ENCODE measurements at regions of chr13 and their contacts with region 1.

Region 1: DNA sequence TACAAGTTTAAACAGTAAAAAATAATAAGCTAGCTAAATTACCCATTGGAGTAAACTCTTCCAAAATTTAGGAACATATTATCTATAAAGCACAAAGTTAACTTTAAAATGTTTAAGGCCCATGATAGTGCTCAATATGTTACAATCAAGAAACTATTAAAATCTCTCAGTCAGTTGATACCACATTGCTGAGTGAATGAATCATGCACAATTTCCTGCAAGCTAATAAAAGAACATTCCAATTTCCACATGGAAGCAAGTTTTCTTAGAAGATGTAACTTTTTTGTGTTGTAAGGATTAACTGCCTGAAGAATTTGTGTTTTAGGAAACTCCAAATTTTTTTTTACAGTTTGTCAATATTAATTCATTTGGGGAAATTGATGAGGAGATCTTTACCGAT is 666.6 kb downstream of the SLITRK1 start:
- DNase-seq: peak; percentile 81
- ATAC-seq: peak; percentile 42
- H3K4me3 ChIP-seq: no peak overlapping the region
- H3K27ac ChIP-seq: peak overlapping the region; percentile 67; the same call in 1 of the 2 replicates
- H3K4me1 ChIP-seq: peaks cover 12% of the 10 kb centered on the region; the same call in 1 of the 2 replicates
- H3K27me3 ChIP-seq: no peaks in the 10 kb centered on the region
- CTCF ChIP-seq: no peak
- POLR2A ChIP-seq: no peak
- RAD21 ChIP-seq: no peak

Region 2: GRCh38 chr13:82647540-82647939 is 568.1 kb before region 1 on chr13:
- CTCF ChIA-PET with region 1: no interaction called
- POLR2A ChIA-PET with region 1: no interaction called
- dilution Hi-C with region 1: no loop called
- in situ Hi-C with region 1: no loop called
- intact Hi-C with region 1: loop called (anchors 5 kb)
- DNase-seq: no peak
- ATAC-seq: no peak
- H3K4me3 ChIP-seq: no peak overlapping the region
- H3K27ac ChIP-seq: no peak overlapping the region
- H3K4me1 ChIP-seq: no peaks in the 10 kb centered on the region
- H3K27me3 ChIP-seq: no peaks in the 10 kb centered on the region
- CTCF ChIP-seq: no peak
- POLR2A ChIP-seq: no peak
- RAD21 ChIP-seq: no peak

Region 3: DNA sequence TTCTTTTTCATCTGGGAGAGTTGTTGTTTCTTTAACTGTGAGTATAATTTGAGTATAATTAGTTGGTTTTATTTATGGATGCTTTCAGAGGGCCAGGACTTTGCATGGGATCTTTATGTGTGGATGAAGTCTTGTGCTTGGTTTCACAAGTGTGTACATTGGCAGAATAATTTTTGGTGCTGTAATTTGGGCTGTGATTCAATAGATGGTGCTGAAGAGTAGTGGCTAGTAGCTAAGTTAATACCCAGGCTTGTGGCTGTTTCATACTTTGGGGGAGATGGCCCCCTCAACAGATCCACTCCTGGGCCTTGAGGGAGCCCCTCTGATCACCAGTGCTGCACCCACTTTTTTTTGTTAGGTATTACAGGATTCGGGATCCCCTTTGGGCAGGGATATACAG is 475.7 kb before region 1 on chr13:
- CTCF ChIA-PET with region 1: no interaction called
- POLR2A ChIA-PET with region 1: no interaction called
- dilution Hi-C with region 1: no loop called
- in situ Hi-C with region 1: no loop called
- intact Hi-C with region 1: loop called (anchors 10 kb)
- DNase-seq: peak; percentile 12
- ATAC-seq: peak; percentile 49; the same call in 1 of the 2 replicates
- H3K4me3 ChIP-seq: no peak overlapping the region
- H3K27ac ChIP-seq: no peak overlapping the region
- H3K4me1 ChIP-seq: no peaks in the 10 kb centered on the region
- H3K27me3 ChIP-seq: no peaks in the 10 kb centered on the region
- CTCF ChIP-seq: peak; percentile 43
- POLR2A ChIP-seq: no peak
- RAD21 ChIP-seq: peak; percentile 38; the same call in 1 of the 2 replicates

Region 4: GRCh38 chr13:82867284-82867683 is 348.3 kb before region 1 on chr13:
- CTCF ChIA-PET with region 1: no interaction called
- POLR2A ChIA-PET with region 1: interaction called, 10 read pairs
- dilution Hi-C with region 1: no loop called
- in situ Hi-C with region 1: no loop called
- intact Hi-C with region 1: no loop called
- DNase-seq: no peak
- ATAC-seq: no peak
- H3K4me3 ChIP-seq: no peak overlapping the region
- H3K27ac ChIP-seq: no peak overlapping the region
- H3K4me1 ChIP-seq: no peaks in the 10 kb centered on the region
- H3K27me3 ChIP-seq: no peaks in the 10 kb centered on the region
- CTCF ChIP-seq: no peak
- POLR2A ChIP-seq: no peak
- RAD21 ChIP-seq: no peak

Region 5: DNA sequence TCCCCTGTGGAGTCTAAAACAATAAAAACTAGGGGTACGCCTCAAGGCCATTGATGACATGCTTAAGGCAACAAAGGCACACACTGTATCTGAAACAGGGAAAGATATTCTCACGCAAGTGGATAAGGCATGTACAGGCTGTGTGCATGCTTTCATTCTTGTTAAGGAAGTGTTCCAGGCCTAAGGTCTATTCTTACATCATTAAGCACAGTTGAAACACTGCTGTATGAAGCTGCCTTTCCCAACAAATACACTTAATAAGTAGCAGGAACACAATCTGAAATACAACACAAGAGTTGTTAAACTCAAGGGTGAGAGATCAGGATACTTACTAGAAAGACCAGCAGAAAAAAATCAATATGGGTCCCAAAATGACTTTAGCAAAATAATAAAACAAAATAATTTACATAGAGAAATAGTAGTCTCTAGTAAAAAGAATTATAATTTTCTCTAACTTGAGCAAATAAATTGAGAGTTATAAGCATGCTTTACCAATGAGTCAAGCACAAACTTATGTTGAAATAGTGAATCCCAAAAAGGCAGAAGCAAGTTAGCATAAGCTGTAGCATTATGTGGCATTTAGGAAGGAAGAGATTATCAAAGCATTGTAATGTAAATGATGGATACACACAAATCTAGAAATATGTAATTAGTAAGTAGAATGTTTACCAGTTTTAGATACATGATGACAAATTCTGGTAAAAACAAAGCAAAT is 130.3 kb before region 1 on chr13:
- CTCF ChIA-PET with region 1: no interaction called
- POLR2A ChIA-PET with region 1: no interaction called
- dilution Hi-C with region 1: no loop called
- in situ Hi-C with region 1: no loop called
- intact Hi-C with region 1: loop called (anchors 5 kb)
- DNase-seq: peak; percentile 69
- ATAC-seq: peak; percentile 77
- H3K4me3 ChIP-seq: no peak overlapping the region
- H3K27ac ChIP-seq: peak overlapping the region; percentile 64
- H3K4me1 ChIP-seq: peaks cover 6% of the 10 kb centered on the region; the same call in 1 of the 2 replicates
- H3K27me3 ChIP-seq: no peaks in the 10 kb centered on the region
- CTCF ChIP-seq: no peak
- POLR2A ChIP-seq: no peak
- RAD21 ChIP-seq: no peak

Measured in IMR-90 (cell line).